ENCODE measurements at regions of chr1 and their contacts with region 1.

Region 1: GRCh38 chr1:15246960-15247614 is at the start of gene FHAD1:
- DNase-seq: peak; percentile 74
- H3K4me3 ChIP-seq: peak within 1 kb of the TSS; percentile 23 to 57 (median 49)
- H3K27ac ChIP-seq: peak within 1 kb of the TSS in 3 of 4 donors; percentile 80 to 92 (median 83)
- H3K4me1 ChIP-seq: peaks cover 0 to 56% (median 54%) of the 10 kb centered on the region in 4 donors
- H3K27me3 ChIP-seq: no peaks in the 10 kb centered on the region
- CTCF ChIP-seq: no peak
- EP300 ChIP-seq: no peak
- POLR2A ChIP-seq: no peak
- total RNA-seq, gene FHAD1: 0.27 to 1.1 TPM in 2 of 4 donors, not detected in the others

Region 2: GRCh38 chr1:14543191-14543875 is 703.8 kb before region 1 on chr1:
- intact Hi-C with region 1: no loop called
- DNase-seq: no peak
- H3K4me3 ChIP-seq: no peak overlapping the region
- H3K27ac ChIP-seq: no peak overlapping the region
- H3K4me1 ChIP-seq: no peaks in the 10 kb centered on the region
- H3K27me3 ChIP-seq: no peaks in the 10 kb centered on the region
- CTCF ChIP-seq: no peak
- EP300 ChIP-seq: no peak
- POLR2A ChIP-seq: no peak

Region 3: DNA sequence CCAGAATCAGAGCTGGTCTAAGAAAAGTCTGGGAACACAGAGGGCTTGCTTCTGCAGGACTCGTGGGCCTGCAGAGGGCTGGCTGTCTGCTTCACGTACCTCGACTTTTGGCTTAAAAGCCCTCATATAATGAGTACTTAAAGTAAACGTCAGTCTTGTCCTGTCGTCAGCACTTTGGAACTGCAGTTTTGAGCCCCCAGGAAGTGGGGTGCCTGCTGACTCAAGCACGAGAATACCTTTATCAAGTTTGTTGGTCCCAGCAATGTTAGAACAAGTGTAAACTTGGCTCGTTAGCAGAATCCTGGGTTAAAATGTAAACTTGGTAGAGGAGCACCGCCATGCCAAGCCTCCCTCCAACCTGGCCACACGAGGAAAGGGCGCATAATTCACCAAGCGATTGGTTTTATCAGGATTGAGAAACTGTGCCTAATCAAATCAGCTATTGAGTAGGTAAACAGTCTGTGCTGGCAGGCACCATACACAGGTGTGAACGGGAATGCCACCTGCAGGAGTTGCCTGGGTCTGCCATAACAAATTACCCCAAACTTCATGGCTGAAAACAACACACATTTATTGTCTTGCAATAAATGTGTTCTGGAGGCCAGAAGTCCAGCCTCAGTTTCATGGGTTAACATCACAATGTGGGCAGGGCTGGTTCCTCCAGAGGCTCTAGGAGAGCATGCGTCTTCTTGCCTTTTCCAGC is 45.1 kb before region 1 on chr1:
- intact Hi-C with region 1: loop called (anchors 5 kb)
- DNase-seq: no peak
- H3K4me3 ChIP-seq: no peak overlapping the region
- H3K27ac ChIP-seq: peak overlapping the region in 3 of 4 donors; percentile 74 to 80 (median 78)
- H3K4me1 ChIP-seq: peaks cover 0 to 53% (median 52%) of the 10 kb centered on the region in 4 donors
- H3K27me3 ChIP-seq: no peaks in the 10 kb centered on the region
- CTCF ChIP-seq: no peak
- EP300 ChIP-seq: no peak
- POLR2A ChIP-seq: no peak

Measured in sigmoid colon (tissue), 7 donors.